ENCODE measurements at regions of chr4 and their contacts with region 1.

Region 1: DNA sequence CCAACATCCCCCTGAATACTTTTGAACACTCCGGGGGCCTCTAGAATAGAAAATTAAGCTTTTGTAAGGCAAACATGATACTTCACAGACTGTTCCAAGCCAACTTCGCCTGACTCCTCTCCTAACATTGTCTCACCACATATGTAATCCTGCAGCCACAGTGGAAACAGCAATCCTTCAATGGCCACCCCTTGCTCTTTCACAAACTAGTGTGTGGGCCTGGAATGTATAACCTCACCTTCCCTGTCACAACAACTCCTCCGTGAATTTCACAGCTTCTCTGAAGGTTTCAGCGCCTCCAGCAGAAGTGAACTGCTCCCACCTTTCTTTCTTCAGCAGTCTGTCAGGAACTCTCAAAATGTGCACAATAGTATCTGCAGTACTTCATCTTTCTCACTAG is 185.1 kb downstream of the ADGRL3 start:
- DNase-seq: no peak
- ATAC-seq: no peak
- H3K4me3 ChIP-seq: no peak overlapping the region
- H3K27ac ChIP-seq: no peak overlapping the region
- H3K4me1 ChIP-seq: no peaks in the 10 kb centered on the region
- H3K27me3 ChIP-seq: no peaks in the 10 kb centered on the region
- CTCF ChIP-seq: no peak

Region 2: GRCh38 chr4:59831746-59832145 is 1553.5 kb before region 1 on chr4:
- intact Hi-C with region 1: loop called in 1 of 2 experiments (anchors 5 kb)
- DNase-seq: no peak
- ATAC-seq: no peak
- H3K4me3 ChIP-seq: no peak overlapping the region
- H3K27ac ChIP-seq: no peak overlapping the region
- H3K4me1 ChIP-seq: no peaks in the 10 kb centered on the region
- H3K27me3 ChIP-seq: no peaks in the 10 kb centered on the region
- CTCF ChIP-seq: no peak

Region 3: GRCh38 chr4:61210186-61210939 is 174.9 kb before region 1 on chr4:
- intact Hi-C with region 1: no loop called
- DNase-seq: no peak
- ATAC-seq: no peak
- H3K4me3 ChIP-seq: no peak overlapping the region
- H3K27ac ChIP-seq: no peak overlapping the region
- H3K4me1 ChIP-seq: no peaks in the 10 kb centered on the region
- H3K27me3 ChIP-seq: peaks cover 0 to 4% (median 0%) of the 10 kb centered on the region in 3 donors
- CTCF ChIP-seq: no peak

Measured in psoas muscle (tissue), 8 donors.